ENCODE measurements at regions of chr12 and their contacts with region 1.

Region 1: DNA sequence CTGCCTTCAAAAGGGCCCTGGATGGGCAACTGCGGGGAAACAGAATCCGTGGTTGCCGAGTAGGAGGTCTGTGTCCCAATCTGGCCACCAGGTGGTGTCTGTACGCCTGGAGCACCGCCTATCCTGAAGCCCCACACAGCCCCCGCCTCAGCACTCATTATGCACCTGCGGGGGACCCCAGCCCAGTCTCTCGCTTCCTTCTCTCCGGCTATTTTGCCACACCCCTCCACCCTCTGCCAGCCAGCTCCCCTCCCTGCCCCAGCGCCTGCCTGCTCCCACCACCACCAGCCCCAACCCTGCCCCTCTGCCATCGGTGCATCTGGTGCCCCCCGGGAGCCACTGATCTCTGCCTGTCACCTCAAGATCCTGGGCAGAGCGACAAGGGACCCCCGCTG is 2.2 kb upstream of the NXPH4 start:
- DNase-seq: peak in 1 of 2 donors; percentile 92
- H3K4me3 ChIP-seq: no peak overlapping the region
- CTCF ChIP-seq: no peak
- POLR2A ChIP-seq: no peak

Region 2: GRCh38 chr12:57239940-57240676 is 25.7 kb after region 1 on chr12:
- intact Hi-C with region 1: loop called (anchors 2 kb)
- DNase-seq: peak in 1 of 2 donors; percentile 47
- H3K4me3 ChIP-seq: no peak overlapping the region
- CTCF ChIP-seq: no peak
- POLR2A ChIP-seq: no peak

Measured in lower leg skin (tissue), 4 donors.